ENCODE measurements at regions of chr17 and their contacts with region 1.

Region 1: GRCh38 chr17:48131216-48131824 is 23.8 kb downstream of the SNX11 start:
- DNase-seq: peak; percentile 80
- ATAC-seq: peak; percentile 86
- H3K4me3 ChIP-seq: no peak overlapping the region
- H3K27ac ChIP-seq: no peak overlapping the region
- H3K4me1 ChIP-seq: peaks cover 16 to 20% of the 10 kb centered on the region in 2 experiments
- H3K27me3 ChIP-seq: no peaks in the 10 kb centered on the region
- CTCF ChIP-seq: peak; percentile 95 to 99 (median 96)
- POLR2A ChIP-seq: no peak
- RAD21 ChIP-seq: peak; percentile 98

Region 2: DNA sequence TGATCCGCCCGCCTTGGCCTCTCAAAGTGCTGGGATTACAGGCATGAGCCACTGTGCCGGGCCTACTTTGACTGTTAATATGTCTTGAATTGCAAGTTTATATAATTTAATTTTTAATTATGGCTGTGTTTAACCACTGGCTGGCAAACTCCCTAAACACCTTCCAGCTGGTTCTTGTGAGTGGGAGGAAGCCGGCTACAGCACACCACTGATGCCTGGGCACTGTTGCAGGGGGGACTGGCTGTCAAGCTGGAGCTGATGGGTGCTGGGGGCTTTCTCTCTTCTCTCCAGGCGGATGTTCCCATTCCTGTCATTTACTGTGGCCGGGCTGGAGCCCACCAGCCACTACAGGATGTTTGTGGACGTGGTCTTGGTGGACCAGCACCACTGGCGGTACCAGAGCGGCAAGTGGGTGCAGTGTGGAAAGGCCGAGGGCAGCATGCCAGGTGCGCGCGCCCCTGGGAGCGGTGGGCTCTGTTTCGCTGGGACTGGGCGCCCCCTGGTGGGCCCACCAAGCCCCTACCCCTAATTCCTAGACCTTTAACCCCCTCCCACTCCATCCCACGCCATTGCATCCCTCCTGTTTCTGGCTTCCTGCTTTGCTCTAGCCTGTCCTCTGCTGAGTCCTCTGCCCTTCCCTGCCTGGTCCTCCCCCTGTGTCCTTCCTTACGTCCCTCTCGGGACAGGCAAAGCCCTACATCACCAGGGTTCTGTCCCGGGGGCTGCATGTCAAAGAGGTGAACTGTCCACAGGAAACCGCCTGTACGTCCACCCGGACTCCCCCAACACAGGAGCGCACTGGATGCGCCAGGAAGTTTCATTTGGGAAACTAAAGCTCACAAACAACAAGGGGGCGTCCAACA is 388.8 kb before region 1 on chr17:
- CTCF ChIA-PET with region 1: no interaction called
- POLR2A ChIA-PET with region 1: no interaction called
- RAD21 ChIA-PET with region 1: no interaction called
- intact Hi-C with region 1: no loop called
- DNase-seq: no peak
- ATAC-seq: peak; percentile 79
- H3K4me3 ChIP-seq: no peak overlapping the region
- H3K27ac ChIP-seq: no peak overlapping the region
- H3K4me1 ChIP-seq: no peaks in the 10 kb centered on the region
- H3K27me3 ChIP-seq: 0 out of 2 replicates have a peak, but pooled peaks cover 4% of the 10 kb centered on the region
- CTCF ChIP-seq: peak; percentile 45 to 54 (median 46); a peak in 5 of 6 replicates
- POLR2A ChIP-seq: no peak
- RAD21 ChIP-seq: peak; percentile 76

Region 3: GRCh38 chr17:48068491-48068961 is 62.8 kb before region 1 on chr17:
- CTCF ChIA-PET with region 1: interaction called, 15 read pairs
- POLR2A ChIA-PET with region 1: no interaction called
- RAD21 ChIA-PET with region 1: no interaction called
- intact Hi-C with region 1: no loop called
- DNase-seq: no peak
- ATAC-seq: peak; percentile 88
- H3K4me3 ChIP-seq: no peak overlapping the region
- H3K27ac ChIP-seq: no peak overlapping the region
- H3K4me1 ChIP-seq: no peaks in the 10 kb centered on the region
- H3K27me3 ChIP-seq: no peaks in the 10 kb centered on the region
- CTCF ChIP-seq: peak in 2 of 3 experiments; percentile 64 to 66; a peak in 4 of 6 replicates
- POLR2A ChIP-seq: no peak
- RAD21 ChIP-seq: peak; percentile 27; the same call in 1 of the 2 replicates

Region 4: GRCh38 chr17:48074315-48075081 is 56.8 kb before region 1 on chr17:
- CTCF ChIA-PET with region 1: interaction called, 56 read pairs
- POLR2A ChIA-PET with region 1: no interaction called
- RAD21 ChIA-PET with region 1: interaction called in 1 of 2 experiments, 17 read pairs
- intact Hi-C with region 1: no loop called
- DNase-seq: peak; percentile 69
- ATAC-seq: peak; percentile 86
- H3K4me3 ChIP-seq: no peak overlapping the region
- H3K27ac ChIP-seq: peak overlapping the region; percentile 21; the same call in 1 of the 2 replicates
- H3K4me1 ChIP-seq: 0 out of 4 replicates have a peak, but pooled peaks cover 0 to 2% of the 10 kb centered on the region in 2 experiments
- H3K27me3 ChIP-seq: no peaks in the 10 kb centered on the region
- CTCF ChIP-seq: peak; percentile 89 to 97 (median 94)
- POLR2A ChIP-seq: no peak
- RAD21 ChIP-seq: peak; percentile 92

Region 5: DNA sequence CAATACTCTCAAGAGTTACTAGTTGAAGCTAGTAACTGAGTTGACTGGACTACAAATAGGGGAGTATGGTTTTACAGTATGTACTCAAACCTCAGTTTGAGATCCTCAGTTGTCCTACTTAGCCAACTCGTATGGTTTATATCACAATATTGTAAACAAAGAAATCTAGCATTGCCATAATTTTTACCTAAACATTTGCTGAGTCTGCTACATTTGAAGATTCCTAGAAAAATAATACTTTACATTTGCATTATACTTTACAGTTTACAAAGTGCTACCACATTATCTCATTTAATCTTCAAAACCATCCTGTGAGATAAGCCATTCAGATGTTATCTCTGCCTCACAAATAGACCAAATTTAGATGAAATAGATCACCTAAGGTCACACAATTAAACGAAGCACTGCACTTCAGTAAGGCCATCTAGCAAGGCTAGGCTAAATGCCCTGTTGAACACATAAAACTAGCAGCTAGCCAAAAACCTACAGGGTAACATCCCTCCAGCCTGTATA is 46.3 kb before region 1 on chr17:
- CTCF ChIA-PET with region 1: interaction called, 56 read pairs
- POLR2A ChIA-PET with region 1: no interaction called
- RAD21 ChIA-PET with region 1: interaction called in 1 of 2 experiments, 6 read pairs
- intact Hi-C with region 1: loop called (anchors 1 kb)
- DNase-seq: no peak
- ATAC-seq: no peak
- H3K4me3 ChIP-seq: no peak overlapping the region
- H3K27ac ChIP-seq: no peak overlapping the region
- H3K4me1 ChIP-seq: peaks cover 3 to 7% of the 10 kb centered on the region in 2 experiments; a peak in 2 of 4 replicates
- H3K27me3 ChIP-seq: no peaks in the 10 kb centered on the region
- CTCF ChIP-seq: no peak
- POLR2A ChIP-seq: no peak
- RAD21 ChIP-seq: no peak

Region 6: GRCh38 chr17:48107168-48108132 is 23.9 kb before region 1 on chr17 and contains the start of gene SNX11:
- CTCF ChIA-PET with region 1: interaction called, 11 read pairs
- POLR2A ChIA-PET with region 1: no interaction called
- RAD21 ChIA-PET with region 1: no interaction called
- intact Hi-C with region 1: no loop called
- DNase-seq: peak; percentile 85
- ATAC-seq: peak; percentile 96
- H3K4me3 ChIP-seq: peak within 1 kb of the TSS; percentile 82 to 94
- H3K27ac ChIP-seq: peak within 1 kb of the TSS; percentile 93
- H3K4me1 ChIP-seq: peaks cover 0 to 15% of the 10 kb centered on the region in 2 experiments; a peak in 2 of 4 replicates
- H3K27me3 ChIP-seq: no peaks in the 10 kb centered on the region
- CTCF ChIP-seq: 0 out of 6 replicates have a peak, but pooled peaks of 2 of the 3 experiments have one; percentile 1 to 6
- POLR2A ChIP-seq: peak; percentile 67
- RAD21 ChIP-seq: no peak
- total RNA-seq, gene SNX11: 26.8 TPM

Measured in HCT116 (cell line).